Colonic mucosa (tissue), 4 donors: ENCODE measurements at regions of chr10 and their contacts with region 1.

Region 1: DNA sequence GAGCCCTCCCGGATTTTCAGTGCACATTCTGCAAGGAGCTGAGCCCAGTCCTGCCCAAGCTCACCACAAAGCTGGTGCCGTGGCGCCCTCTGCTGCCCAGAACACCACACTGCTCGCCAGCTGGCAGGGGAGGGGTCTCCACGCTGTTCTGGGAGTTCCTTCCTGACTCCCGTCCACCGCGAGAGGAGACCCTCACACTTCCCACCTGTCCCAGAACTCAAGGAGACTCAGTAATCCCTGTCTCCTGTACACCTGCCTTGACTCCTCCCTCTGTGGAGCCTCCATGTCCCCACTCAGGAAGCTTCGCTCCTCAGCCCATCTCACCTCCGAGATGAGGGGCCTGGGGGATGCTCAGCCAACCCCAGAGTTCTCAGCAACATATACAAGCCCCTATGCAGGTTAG is 11.3 kb downstream of the C10orf105 start:
- DNase-seq: peak; percentile 62
- H3K4me3 ChIP-seq: no peak overlapping the region
- H3K27ac ChIP-seq: no peak overlapping the region
- H3K4me1 ChIP-seq: no peaks in the 10 kb centered on the region
- H3K27me3 ChIP-seq: no peaks in the 10 kb centered on the region
- CTCF ChIP-seq: peak; percentile 88

Region 2: DNA sequence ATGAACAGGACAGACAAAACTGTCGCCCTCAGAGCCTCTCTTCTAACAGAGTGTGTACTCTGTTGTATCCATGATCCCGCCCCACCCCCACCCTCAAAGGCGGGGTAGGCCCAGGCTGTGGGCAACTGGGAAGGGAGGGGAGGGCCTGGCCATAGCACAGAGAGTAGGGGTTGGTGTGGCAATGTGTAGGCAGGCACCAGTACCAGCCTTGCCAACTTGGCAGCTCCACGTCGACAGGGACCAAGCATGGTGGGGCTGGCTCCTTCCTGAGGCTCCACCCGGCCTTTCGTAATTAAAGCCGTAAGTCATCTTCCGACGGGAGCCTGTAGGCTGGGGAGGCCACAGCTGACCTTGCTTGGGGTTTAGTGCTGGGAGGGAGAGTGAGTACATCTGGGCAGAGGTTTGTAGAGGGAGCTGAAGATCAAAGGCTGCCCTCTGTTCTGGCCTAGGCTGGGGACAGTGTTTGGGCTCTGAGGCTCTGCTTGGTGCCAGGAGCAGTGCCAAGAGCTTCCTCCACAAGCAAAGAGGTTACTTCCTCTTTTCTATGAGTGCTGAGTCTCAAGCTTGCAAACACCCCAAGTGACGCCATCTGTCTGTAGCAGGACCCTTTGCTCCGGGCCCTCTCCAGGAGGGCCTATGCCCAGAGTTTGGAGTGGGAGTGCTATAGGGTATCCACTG is 110.3 kb before region 1 on chr10:
- intact Hi-C with region 1: no loop called
- DNase-seq: peak; percentile 33
- H3K4me3 ChIP-seq: no peak overlapping the region
- H3K27ac ChIP-seq: peak overlapping the region; percentile 38
- H3K4me1 ChIP-seq: no peaks in the 10 kb centered on the region
- H3K27me3 ChIP-seq: no peaks in the 10 kb centered on the region
- CTCF ChIP-seq: no peak

Region 3: DNA sequence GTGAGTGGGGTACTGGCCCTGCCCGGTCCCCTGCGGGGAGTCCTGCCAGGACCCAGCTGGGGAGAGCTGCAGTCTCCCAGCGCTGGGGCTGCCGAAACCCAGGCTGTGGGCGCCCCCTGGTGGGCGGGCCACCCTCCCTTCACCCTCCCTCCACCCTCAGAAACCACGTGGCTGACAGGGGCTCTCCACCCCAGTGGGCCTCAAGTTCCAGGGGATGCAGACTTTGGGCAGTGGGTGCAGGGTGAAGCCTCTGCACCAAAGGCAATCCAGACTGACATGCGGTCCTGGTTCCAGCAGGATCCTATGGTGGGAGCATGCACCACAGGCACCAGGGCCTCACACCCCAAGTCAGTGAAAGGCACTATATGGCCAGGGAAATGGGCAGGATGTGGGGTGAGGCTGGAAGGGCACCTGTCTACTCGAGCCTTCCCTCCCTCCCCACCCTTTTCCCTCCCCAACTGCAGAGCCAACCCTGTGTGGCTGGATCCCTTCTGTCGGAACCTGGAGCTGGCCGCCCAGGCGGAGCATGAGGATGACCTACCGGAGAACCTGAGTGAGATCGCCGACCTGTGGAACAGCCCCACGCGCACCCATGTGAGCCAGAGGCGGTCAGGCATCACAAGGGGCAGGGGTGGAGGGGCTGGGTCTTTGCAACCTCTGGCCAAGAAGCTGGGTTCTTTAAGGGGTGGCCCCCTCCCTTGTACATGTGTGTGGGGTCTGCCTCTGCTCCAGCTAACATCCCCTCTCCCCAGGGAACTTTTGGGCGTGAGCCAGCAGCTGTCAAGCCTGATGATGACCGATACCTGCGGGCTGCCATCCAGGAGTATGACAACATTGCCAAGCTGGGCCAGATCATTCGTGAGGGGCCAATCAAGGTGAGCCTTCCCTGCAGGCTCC is 104.0 kb after region 1 on chr10:
- intact Hi-C with region 1: loop called (anchors 10 kb)
- DNase-seq: peak; percentile 76
- H3K4me3 ChIP-seq: no peak overlapping the region
- H3K27ac ChIP-seq: no peak overlapping the region
- H3K4me1 ChIP-seq: no peaks in the 10 kb centered on the region
- H3K27me3 ChIP-seq: no peaks in the 10 kb centered on the region
- CTCF ChIP-seq: peak; percentile 95